GM12878 (cell line): ENCODE measurements at regions of chr5 and their contacts with region 1.

Region 1: GRCh38 chr5:133868946-133869518 is 99.4 kb downstream of the C5orf15 start:
- DNase-seq: no peak
- ATAC-seq: peak; percentile 85
- H3K4me3 ChIP-seq: no peak overlapping the region
- H3K27ac ChIP-seq: no peak overlapping the region
- H3K4me1 ChIP-seq: no peaks in the 10 kb centered on the region
- H3K27me3 ChIP-seq: no peaks in the 10 kb centered on the region
- CTCF ChIP-seq: peak; percentile 77 to 88 (median 82)
- EP300 ChIP-seq: no peak
- POLR2A ChIP-seq: no peak
- RAD21 ChIP-seq: peak; percentile 81

Region 2: GRCh38 chr5:133423618-133424282 is 445.3 kb before region 1 on chr5:
- CTCF ChIA-PET with region 1: interaction called, 49 read pairs
- POLR2A ChIA-PET with region 1: no interaction called
- RAD21 ChIA-PET with region 1: interaction called, 20 read pairs
- SMC1A ChIA-PET with region 1: interaction called, 19 read pairs
- in situ Hi-C with region 1: no loop called
- intact Hi-C with region 1: loop called (anchors 2 kb)
- DNase-seq: peak; percentile 16
- ATAC-seq: peak; percentile 92
- H3K4me3 ChIP-seq: no peak overlapping the region
- H3K27ac ChIP-seq: no peak overlapping the region
- H3K4me1 ChIP-seq: 0 out of 2 replicates have a peak, but pooled peaks cover 4% of the 10 kb centered on the region
- H3K27me3 ChIP-seq: peaks cover 3% of the 10 kb centered on the region in 2 experiments; a peak in 1 of 4 replicates
- CTCF ChIP-seq: peak; percentile 87 to 93 (median 91)
- EP300 ChIP-seq: no peak
- POLR2A ChIP-seq: no peak
- RAD21 ChIP-seq: peak; percentile 65

Region 3: DNA sequence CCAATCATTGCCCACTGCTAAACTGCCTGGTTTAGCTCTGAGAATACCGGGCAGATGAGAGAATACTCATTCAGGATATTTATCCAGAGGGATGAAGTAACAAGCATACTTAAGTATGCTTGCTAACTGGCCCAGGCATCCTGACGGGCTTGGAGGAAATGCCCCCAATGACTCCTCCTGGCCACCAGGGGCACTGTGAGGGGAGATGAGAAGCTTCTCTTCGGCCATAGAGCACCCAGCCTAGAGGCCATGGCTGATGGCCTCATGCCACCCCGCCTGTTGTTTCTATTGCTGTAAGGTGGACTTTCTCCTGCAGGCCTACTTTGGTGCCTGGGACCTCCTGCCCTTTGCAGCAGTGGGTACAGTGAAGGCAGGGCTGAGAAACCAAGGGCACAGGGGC is 122.2 kb before region 1 on chr5:
- CTCF ChIA-PET with region 1: interaction called, 156 read pairs
- POLR2A ChIA-PET with region 1: interaction called, 3 read pairs
- RAD21 ChIA-PET with region 1: interaction called, 11 read pairs
- SMC1A ChIA-PET with region 1: interaction called, 6 read pairs
- in situ Hi-C with region 1: no loop called
- intact Hi-C with region 1: no loop called
- DNase-seq: no peak
- ATAC-seq: no peak
- H3K4me3 ChIP-seq: no peak overlapping the region
- H3K27ac ChIP-seq: no peak overlapping the region
- H3K4me1 ChIP-seq: peaks cover 4% of the 10 kb centered on the region
- H3K27me3 ChIP-seq: no peaks in the 10 kb centered on the region; a peak in 1 of 4 replicates
- CTCF ChIP-seq: peak in 2 of 3 experiments; percentile 31 to 38; a peak in 3 of 6 replicates
- EP300 ChIP-seq: no peak
- POLR2A ChIP-seq: no peak
- RAD21 ChIP-seq: no peak

Region 4: DNA sequence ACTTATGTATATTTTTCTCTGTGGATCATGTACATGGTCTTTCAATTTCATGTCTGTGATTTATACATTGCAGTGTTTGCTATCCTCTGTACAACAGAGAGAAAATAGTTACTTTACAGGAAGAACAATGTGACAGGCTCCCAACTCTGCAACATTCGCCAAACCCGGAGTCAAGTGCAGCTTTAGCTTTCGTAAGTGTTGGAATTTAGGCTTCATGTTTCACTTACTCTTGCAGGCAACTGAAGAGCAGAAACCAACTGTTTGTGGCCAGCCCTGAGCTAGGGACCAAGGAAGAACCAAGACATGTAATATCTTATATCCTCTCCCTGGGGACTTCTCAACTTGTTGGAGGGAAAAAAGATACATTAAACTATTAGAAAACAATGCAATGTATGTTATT is 48.5 kb before region 1 on chr5:
- CTCF ChIA-PET with region 1: interaction called, 77 read pairs
- POLR2A ChIA-PET with region 1: interaction called, 3 read pairs
- RAD21 ChIA-PET with region 1: interaction called, 49 read pairs
- SMC1A ChIA-PET with region 1: interaction called, 35 read pairs
- in situ Hi-C with region 1: no loop called
- intact Hi-C with region 1: no loop called
- DNase-seq: no peak
- ATAC-seq: no peak
- H3K4me3 ChIP-seq: no peak overlapping the region
- H3K27ac ChIP-seq: no peak overlapping the region
- H3K4me1 ChIP-seq: peaks cover 20% of the 10 kb centered on the region
- H3K27me3 ChIP-seq: no peaks in the 10 kb centered on the region
- CTCF ChIP-seq: no peak
- EP300 ChIP-seq: no peak
- POLR2A ChIP-seq: no peak
- RAD21 ChIP-seq: no peak

Region 5: GRCh38 chr5:133848341-133848811 is 20.7 kb before region 1 on chr5:
- CTCF ChIA-PET with region 1: interaction called, 15 read pairs
- POLR2A ChIA-PET with region 1: interaction called, 3 read pairs
- RAD21 ChIA-PET with region 1: interaction called, 4 read pairs
- SMC1A ChIA-PET with region 1: interaction called, 5 read pairs
- in situ Hi-C with region 1: no loop called
- intact Hi-C with region 1: no loop called
- DNase-seq: no peak
- ATAC-seq: no peak
- H3K4me3 ChIP-seq: no peak overlapping the region
- H3K27ac ChIP-seq: no peak overlapping the region
- H3K4me1 ChIP-seq: peaks cover 11% of the 10 kb centered on the region
- H3K27me3 ChIP-seq: no peaks in the 10 kb centered on the region
- CTCF ChIP-seq: no peak
- EP300 ChIP-seq: no peak
- POLR2A ChIP-seq: no peak
- RAD21 ChIP-seq: no peak

Region 6: GRCh38 chr5:133957591-133957990 is 88.6 kb after region 1 on chr5:
- CTCF ChIA-PET with region 1: no interaction called
- POLR2A ChIA-PET with region 1: no interaction called
- RAD21 ChIA-PET with region 1: no interaction called
- SMC1A ChIA-PET with region 1: no interaction called
- in situ Hi-C with region 1: no loop called
- intact Hi-C with region 1: no loop called
- DNase-seq: peak; percentile 74
- ATAC-seq: peak; percentile 90
- H3K4me3 ChIP-seq: peak overlapping the region; percentile 42
- H3K27ac ChIP-seq: peak overlapping the region; percentile 87
- H3K4me1 ChIP-seq: peaks cover 13% of the 10 kb centered on the region
- H3K27me3 ChIP-seq: no peaks in the 10 kb centered on the region
- CTCF ChIP-seq: no peak
- EP300 ChIP-seq: 0 out of 4 replicates have a peak, but pooled peaks of 1 of the 2 experiments have one; percentile 24
- POLR2A ChIP-seq: no peak
- RAD21 ChIP-seq: no peak

Region 7: DNA sequence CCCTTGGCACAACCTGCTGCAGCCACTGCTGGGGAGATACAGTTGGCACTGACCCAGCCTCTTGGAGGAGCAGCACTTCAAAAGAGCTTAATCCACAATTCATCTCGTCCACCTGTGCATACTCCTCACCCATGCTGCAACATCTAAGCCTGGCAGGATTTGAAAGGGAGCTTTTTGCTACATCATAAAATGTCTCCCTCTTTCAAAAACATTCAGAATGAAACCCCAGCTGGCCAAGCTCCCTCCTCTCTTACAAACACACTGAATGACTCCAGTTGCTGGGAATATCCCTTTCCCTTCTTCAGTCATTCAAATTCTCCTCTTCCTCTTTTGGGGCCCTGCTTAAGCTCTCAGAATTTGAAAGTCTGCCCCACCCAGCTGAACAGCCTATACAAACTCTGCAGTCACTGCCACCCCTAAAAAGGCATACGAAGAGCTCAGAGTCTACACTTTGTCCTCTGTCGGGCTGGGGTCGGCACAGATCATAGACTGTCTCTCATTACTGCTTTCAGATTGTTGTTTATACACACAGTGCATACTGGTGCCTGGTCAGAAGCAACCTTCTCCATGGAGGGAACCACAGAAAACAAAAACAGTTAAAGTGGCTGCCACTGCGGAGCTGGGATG is 108.2 kb after region 1 on chr5:
- CTCF ChIA-PET with region 1: interaction called, 17 read pairs
- POLR2A ChIA-PET with region 1: no interaction called
- RAD21 ChIA-PET with region 1: interaction called, 4 read pairs
- SMC1A ChIA-PET with region 1: interaction called, 5 read pairs
- in situ Hi-C with region 1: no loop called
- intact Hi-C with region 1: no loop called
- DNase-seq: peak; percentile 34
- ATAC-seq: peak; percentile 75
- H3K4me3 ChIP-seq: no peak overlapping the region
- H3K27ac ChIP-seq: peak overlapping the region; percentile 20
- H3K4me1 ChIP-seq: peaks cover 7% of the 10 kb centered on the region
- H3K27me3 ChIP-seq: no peaks in the 10 kb centered on the region
- CTCF ChIP-seq: no peak
- EP300 ChIP-seq: no peak
- POLR2A ChIP-seq: no peak
- RAD21 ChIP-seq: no peak